ENCODE measurements at regions of chr17 and their contacts with region 1.

Region 1: GRCh38 chr17:50626037-50626574 is 8.6 kb upstream of the ABCC3 start:
- DNase-seq: peak; percentile 73 to 87
- H3K4me3 ChIP-seq: no peak overlapping the region
- H3K27ac ChIP-seq: no peak overlapping the region
- H3K4me1 ChIP-seq: peaks cover 0 to 39% (median 18%) of the 10 kb centered on the region in 4 experiments; a peak in 6 of 7 replicates
- H3K27me3 ChIP-seq: peaks cover 0 to 2% (median 0%) of the 10 kb centered on the region in 4 experiments; a peak in 3 of 7 replicates
- CTCF ChIP-seq: peak; percentile 92 to 97 (median 92)
- EP300 ChIP-seq: no peak
- POLR2A ChIP-seq: no peak
- RAD21 ChIP-seq: peak; percentile 86 to 92

Region 2: DNA sequence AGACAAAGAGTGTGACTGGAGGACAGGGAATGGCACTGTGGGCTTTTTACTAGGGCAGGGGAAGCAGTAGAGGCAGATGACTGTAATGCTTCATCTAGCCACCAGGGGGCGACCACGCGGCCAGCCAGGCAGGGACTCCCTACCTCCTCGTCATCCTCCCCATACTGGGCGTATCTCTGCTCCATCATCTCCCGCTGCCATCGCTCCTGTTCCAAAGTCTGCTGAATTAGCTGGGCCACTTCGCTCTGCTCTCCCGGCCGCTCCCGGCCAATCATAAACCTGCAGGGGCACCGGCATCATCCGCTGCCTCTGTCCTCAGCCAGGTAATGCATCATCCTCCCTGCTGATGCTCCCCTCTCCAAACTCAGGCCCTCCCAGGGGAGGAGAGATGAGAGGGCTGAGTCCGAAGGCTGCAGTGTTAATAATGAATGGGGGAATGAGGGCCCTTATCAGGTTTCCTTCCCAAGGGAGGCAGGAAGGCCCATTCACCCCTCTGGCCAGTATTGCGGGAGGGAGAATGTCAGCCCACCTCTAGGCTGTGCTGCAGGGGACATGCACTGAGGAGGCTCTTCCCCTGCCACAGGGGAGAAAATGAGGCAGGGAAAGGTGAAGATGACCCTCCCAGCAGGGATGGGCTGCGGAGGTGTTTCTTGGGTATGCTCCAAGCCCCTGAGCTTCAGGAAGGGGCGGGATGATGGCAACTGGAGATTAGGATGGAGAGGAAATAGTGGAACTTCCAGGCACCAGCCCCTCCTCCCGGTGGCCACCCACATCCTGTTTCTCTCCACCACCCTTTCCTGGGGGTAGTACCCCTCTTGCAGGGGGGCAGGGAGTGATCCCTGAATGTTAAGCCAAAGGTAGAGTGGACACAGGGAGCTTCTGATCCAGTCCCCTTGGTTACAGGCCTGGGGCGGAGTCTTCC is 485.9 kb before region 1 on chr17:
- CTCF ChIA-PET with region 1: no interaction called
- POLR2A ChIA-PET with region 1: no interaction called
- DNase-seq: peak; percentile 72 to 96
- H3K4me3 ChIP-seq: no peak overlapping the region
- H3K27ac ChIP-seq: no peak overlapping the region; the same call in 1 of the 2 replicates
- H3K4me1 ChIP-seq: peaks cover 0 to 7% (median 0%) of the 10 kb centered on the region in 4 experiments; a peak in 1 of 7 replicates
- H3K27me3 ChIP-seq: no peaks in the 10 kb centered on the region
- CTCF ChIP-seq: peak; percentile 87 to 98 (median 95)
- EP300 ChIP-seq: peak in 1 of 2 experiments; percentile 18; a peak in 1 of 3 replicates
- POLR2A ChIP-seq: no peak
- RAD21 ChIP-seq: peak; percentile 68 to 71

Region 3: DNA sequence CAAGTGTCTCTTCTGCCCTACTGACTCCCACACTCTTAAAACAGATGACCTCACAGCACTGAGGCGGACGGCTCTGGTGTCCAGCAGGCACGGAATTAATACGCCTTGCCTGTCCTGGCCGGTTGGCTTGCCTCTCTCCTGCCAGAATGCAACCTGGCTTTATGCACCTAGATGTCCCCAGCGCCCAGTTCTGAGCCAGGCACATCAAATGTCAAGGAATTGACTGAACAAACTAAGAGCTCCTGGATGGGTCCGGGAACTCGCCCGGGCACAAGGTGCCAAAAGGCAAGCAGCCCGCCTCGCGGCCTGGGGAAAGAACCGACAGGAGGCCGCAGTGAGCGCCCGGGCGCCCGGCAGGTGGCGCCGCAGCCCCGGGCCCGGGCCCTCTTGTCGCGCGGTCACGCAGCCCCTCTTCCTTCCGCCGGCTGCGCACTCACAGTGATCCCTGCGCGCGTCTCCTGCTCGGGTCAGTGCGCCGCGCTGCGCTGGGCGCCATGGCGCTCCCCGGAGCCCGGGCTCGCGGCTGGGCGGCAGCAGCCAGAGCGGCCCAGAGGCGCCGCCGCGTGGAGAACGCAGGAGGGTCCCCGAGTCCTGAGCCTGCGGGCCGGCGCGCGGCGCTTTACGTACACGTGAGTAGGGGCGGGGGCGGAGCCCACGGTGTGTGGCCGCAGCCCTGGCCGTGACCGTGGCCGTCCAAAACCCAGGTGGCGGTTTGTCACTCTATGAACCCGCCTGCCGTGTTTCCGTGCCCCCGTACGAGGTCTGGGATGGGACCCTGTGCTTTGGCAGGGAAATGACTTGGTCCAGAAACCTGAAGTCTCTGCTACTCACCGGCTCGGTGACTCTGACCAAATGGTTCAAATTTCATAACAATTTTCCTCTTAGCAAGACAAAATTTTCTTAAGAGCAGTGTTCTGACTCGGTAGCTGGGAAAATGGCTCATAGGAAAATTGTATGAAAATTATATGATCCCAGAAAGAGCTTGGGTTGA is 147.4 kb before region 1 on chr17 and contains the start of gene RSAD1:
- CTCF ChIA-PET with region 1: interaction called, 51 read pairs
- POLR2A ChIA-PET with region 1: no interaction called
- DNase-seq: peak; percentile 68 to 84
- H3K4me3 ChIP-seq: peak within 1 kb of the TSS; percentile 46 to 81 (median 72)
- H3K27ac ChIP-seq: no peak within 1 kb of the TSS; the same call in 1 of the 2 replicates
- H3K4me1 ChIP-seq: peaks cover 0 to 10% (median 6%) of the 10 kb centered on the region in 4 experiments; a peak in 6 of 7 replicates
- H3K27me3 ChIP-seq: peaks cover 0 to 4% (median under 1%) of the 10 kb centered on the region in 4 experiments; a peak in 2 of 7 replicates
- CTCF ChIP-seq: peak; percentile 66 to 91 (median 67)
- EP300 ChIP-seq: no peak; a peak in 1 of 3 replicates
- POLR2A ChIP-seq: peak in 1 of 2 experiments; percentile 87; a peak in 2 of 3 replicates
- RAD21 ChIP-seq: peak; percentile 40 to 58; a peak in 3 of 4 replicates
- total RNA-seq, gene RSAD1: 31.3 and 33.5 TPM in 2 replicates

Region 4: DNA sequence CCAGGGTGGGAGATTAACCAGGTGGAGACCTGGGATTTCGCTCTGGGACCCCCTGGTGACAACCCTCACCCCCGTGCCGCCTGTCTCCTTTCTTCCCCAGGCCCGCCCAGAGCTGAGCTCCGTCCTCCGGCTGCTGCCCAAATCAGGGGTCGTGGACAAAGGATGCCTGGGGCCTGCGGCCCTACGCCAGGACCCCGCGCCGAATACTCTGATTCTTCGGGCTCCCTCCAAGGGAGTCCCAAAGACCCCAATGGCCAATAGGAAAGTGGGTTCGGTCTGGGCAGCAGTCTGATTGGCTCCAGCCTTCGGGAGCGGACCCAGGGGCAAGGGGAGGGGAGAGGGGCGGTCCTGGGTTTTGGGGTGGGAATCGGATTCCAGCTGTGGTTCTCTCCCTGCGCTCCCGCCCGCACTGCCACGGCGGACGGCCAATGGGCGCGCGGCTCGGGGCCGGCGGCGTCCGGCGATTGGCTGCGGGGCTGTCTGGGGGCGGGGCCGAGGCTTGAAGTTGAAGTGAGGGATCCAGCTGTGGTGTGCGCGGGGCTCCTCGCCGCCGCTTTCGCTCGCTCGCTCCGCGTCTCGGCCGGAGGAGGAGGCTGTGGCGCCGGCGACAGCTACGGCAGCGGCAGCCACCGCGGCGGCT is 65.8 kb before region 1 on chr17 and contains the start of gene CACNA1G:
- CTCF ChIA-PET with region 1: interaction called, 89 read pairs
- POLR2A ChIA-PET with region 1: interaction called, 4 read pairs
- DNase-seq: peak; percentile 90 to 99
- H3K4me3 ChIP-seq: peak within 1 kb of the TSS; percentile 35 to 63 (median 51)
- H3K27ac ChIP-seq: no peak within 1 kb of the TSS
- H3K4me1 ChIP-seq: peaks cover 0 to 33% (median 19%) of the 10 kb centered on the region in 4 experiments; a peak in 6 of 7 replicates
- H3K27me3 ChIP-seq: peaks cover 25 to 71% (median 63%) of the 10 kb centered on the region in 4 experiments
- CTCF ChIP-seq: no peak
- EP300 ChIP-seq: no peak
- POLR2A ChIP-seq: peak in 1 of 2 experiments; percentile 48; a peak in 1 of 3 replicates
- RAD21 ChIP-seq: no peak
- total RNA-seq, gene CACNA1G: 4.8 and 4.9 TPM in 2 replicates

Region 5: DNA sequence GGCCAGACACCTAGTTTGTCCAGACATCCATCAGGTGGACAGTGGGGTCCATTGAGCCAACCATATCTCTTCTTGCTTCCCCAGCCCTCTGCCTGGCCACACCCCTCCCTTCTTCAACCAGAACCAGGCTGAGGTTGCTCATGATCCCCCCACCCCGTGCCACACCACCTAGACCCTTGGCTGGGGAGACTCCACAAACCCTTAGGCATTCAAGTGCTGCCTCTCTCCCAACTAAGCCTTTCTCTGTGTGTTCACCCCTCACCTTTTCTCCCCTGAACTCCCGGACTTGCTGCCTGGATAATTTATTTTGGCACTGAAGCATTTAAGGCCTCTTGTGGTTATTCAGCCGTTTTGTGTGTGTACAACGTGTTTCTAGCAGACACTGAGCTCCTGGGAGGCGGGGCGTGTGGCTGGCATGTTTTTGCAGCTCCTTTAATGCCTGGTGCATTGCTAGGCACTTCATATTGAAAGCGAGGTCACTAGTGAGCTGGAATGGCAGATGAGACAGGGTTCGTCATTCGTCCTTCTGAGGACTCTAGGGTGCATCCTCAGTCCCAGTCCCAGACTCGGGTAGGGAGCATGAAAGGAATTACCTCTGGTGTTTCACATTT is 36.9 kb before region 1 on chr17:
- CTCF ChIA-PET with region 1: interaction called, 95 read pairs
- POLR2A ChIA-PET with region 1: no interaction called
- DNase-seq: no peak
- H3K4me3 ChIP-seq: no peak overlapping the region
- H3K27ac ChIP-seq: no peak overlapping the region
- H3K4me1 ChIP-seq: peaks cover 0 to 20% (median 11%) of the 10 kb centered on the region in 4 experiments; a peak in 6 of 7 replicates
- H3K27me3 ChIP-seq: no peaks in the 10 kb centered on the region; a peak in 1 of 7 replicates
- CTCF ChIP-seq: no peak
- EP300 ChIP-seq: no peak
- POLR2A ChIP-seq: no peak
- RAD21 ChIP-seq: no peak

Region 6: DNA sequence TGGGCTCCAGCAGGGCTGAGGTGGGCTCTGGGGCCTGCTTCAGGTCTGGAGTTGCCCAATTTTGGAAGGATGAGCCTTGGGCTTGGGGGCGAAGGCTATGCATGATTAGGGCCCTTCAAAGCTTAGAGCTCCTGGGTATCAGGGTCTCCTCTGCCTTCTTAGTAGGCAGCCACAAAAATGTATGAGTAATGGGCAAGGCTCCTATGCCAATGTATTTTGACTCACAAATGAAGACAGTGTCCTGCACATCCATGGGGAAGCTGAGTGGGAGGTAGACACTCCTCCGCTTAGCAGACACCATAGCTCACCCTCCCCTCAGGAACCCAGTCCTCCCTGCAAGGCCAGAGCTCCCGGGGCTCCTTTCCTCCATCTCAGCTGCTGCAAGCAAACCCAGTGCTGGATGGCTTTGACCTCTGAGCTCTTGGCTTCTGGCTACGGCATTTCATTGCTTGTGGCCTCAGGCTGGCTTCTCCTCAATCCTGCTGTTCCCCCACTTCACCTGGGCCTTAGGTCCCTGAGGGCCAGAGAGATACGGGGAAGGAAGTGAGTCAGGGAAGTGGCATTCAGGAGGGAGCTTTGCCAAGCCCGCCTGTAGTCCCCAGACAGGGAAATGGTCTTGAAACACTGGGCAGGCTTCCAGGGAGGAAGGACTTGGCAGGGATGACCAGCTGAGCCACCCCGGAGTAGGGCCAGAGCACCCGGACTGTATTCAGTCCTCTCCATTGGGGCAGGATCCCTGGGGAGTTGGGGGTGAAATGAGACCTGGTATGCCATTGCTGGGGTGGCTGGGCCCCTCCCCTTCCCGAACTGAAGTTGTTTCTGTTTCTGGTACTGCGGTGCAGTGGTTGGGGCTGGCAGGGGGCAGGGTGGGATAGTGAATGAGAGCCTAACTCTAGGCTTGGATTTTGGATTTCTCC is 13.0 kb after region 1 on chr17:
- CTCF ChIA-PET with region 1: interaction called, 135 read pairs
- POLR2A ChIA-PET with region 1: interaction called, 7 read pairs
- DNase-seq: no peak
- H3K4me3 ChIP-seq: no peak overlapping the region
- H3K27ac ChIP-seq: no peak overlapping the region
- H3K4me1 ChIP-seq: peaks cover 0 to 11% (median 7%) of the 10 kb centered on the region in 4 experiments; a peak in 4 of 7 replicates
- H3K27me3 ChIP-seq: peaks cover 18 to 27% (median 27%) of the 10 kb centered on the region in 4 experiments
- CTCF ChIP-seq: no peak
- EP300 ChIP-seq: no peak
- POLR2A ChIP-seq: no peak
- RAD21 ChIP-seq: no peak

Region 7: DNA sequence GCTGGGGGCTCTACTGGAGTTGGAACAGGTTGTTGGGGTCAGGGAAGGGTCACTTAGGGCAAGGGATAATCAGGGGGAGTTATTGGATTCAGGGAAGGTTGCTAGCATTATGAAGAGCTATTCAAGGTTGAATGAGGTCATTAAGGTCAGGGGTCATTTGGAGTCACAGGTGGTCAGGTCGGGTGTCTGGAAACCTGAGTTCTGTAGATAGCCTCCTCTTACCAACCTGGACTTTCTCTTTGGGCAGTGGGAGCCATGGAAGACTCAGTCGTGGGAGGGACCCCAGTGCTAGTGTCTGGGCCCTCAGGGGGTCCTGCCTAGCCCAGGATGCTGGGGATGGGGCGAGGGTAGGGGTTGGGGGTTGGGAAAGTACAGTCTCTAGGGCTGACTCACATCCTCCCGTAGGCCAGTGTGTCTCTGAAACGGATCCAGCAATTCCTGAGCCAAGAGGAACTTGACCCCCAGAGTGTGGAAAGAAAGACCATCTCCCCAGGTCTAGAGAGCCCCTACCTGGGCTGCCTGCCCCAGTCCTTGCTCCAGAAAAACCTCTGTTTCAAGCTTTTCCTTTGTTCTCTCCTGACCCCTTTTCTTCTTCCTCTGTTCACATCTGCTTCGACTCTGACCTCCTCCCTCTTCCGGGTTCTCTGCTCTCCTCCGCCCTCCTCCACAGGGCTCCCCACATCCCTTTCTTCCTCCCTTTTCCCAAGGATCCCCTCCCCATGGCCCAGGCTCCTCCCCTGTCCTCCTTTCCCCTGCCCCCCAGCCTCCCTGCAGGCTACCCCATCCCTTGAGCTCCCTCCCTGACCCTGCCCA is 42.1 kb after region 1 on chr17:
- CTCF ChIA-PET with region 1: interaction called, 41 read pairs
- POLR2A ChIA-PET with region 1: no interaction called
- DNase-seq: no peak
- H3K4me3 ChIP-seq: no peak overlapping the region
- H3K27ac ChIP-seq: no peak overlapping the region
- H3K4me1 ChIP-seq: peaks cover 0 to 14% (median 3%) of the 10 kb centered on the region in 4 experiments; a peak in 5 of 7 replicates
- H3K27me3 ChIP-seq: no peaks in the 10 kb centered on the region
- CTCF ChIP-seq: no peak
- EP300 ChIP-seq: no peak
- POLR2A ChIP-seq: no peak
- RAD21 ChIP-seq: no peak

Region 8: GRCh38 chr17:50707289-50708049 is 81.4 kb after region 1 on chr17 and contains the start of gene ANKRD40:
- CTCF ChIA-PET with region 1: interaction called, 26 read pairs
- POLR2A ChIA-PET with region 1: interaction called, 3 read pairs
- DNase-seq: peak in 1 of 2 experiments; percentile 86
- H3K4me3 ChIP-seq: peak within 1 kb of the TSS; percentile 46 to 85 (median 76)
- H3K27ac ChIP-seq: peak within 1 kb of the TSS; percentile 64
- H3K4me1 ChIP-seq: peaks cover 0 to 5% (median 4%) of the 10 kb centered on the region in 4 experiments; a peak in 4 of 7 replicates
- H3K27me3 ChIP-seq: no peaks in the 10 kb centered on the region
- CTCF ChIP-seq: no peak
- EP300 ChIP-seq: no peak; a peak in 1 of 3 replicates
- POLR2A ChIP-seq: peak; percentile 33 to 57; a peak in 2 of 3 replicates
- RAD21 ChIP-seq: no peak
- total RNA-seq, gene ANKRD40: 50.1 and 54.3 TPM in 2 replicates